Activated T-helper 1 cell treated with anti-CD3 and anti-CD28 coated beads, Interleukin-12 subunit alpha, Interleukin-12 subunit beta, Interleukin-2, Interleukin-4 antibody, amounts not matched to agents 30 ng/mL and 10 ng/mL and 1 ng/mL, durations not matched to agents 14 hours and 24 hours and 36 hours (primary cell): ENCODE measurements at regions of chr5 and their contacts with region 1.

Region 1: GRCh38 chr5:115841382-115842088 is at the starts of genes AP3S1 and ATG12:
- DNase-seq: peak; percentile 87
- H3K4me3 Mint-ChIP-seq: peak within 1 kb of the TSS; percentile 98
- H3K27ac Mint-ChIP-seq: peak within 1 kb of the TSS; percentile 99
- H3K4me1 Mint-ChIP-seq: peaks cover 52% of the 10 kb centered on the region
- H3K27me3 Mint-ChIP-seq: no peaks in the 10 kb centered on the region
- total RNA-seq, gene AP3S1: 49.7 and 53.5 TPM in 2 replicates
- total RNA-seq, gene ATG12: 29.6 and 37.4 TPM in 2 replicates

Region 2: GRCh38 chr5:115169487-115170133 is 671.9 kb before region 1 on chr5 and contains the start of gene TRIM36:
- intact Hi-C with region 1: loop called (anchors 1 kb)
- DNase-seq: peak; percentile 90
- H3K4me3 Mint-ChIP-seq: peak within 1 kb of the TSS; percentile 82
- H3K27ac Mint-ChIP-seq: peak within 1 kb of the TSS; percentile 37
- H3K4me1 Mint-ChIP-seq: peaks cover 6% of the 10 kb centered on the region
- H3K27me3 Mint-ChIP-seq: peaks cover 60% of the 10 kb centered on the region
- total RNA-seq, gene TRIM36: not detected in 2 replicates

Region 3: GRCh38 chr5:115296124-115297022 is 545.2 kb before region 1 on chr5 and contains the start of gene CCDC112:
- intact Hi-C with region 1: loop called (anchors 1 kb)
- DNase-seq: peak; percentile 51
- H3K4me3 Mint-ChIP-seq: peak within 1 kb of the TSS; percentile 77
- H3K27ac Mint-ChIP-seq: no peak within 1 kb of the TSS
- H3K4me1 Mint-ChIP-seq: peaks cover 9% of the 10 kb centered on the region
- H3K27me3 Mint-ChIP-seq: peaks cover 53% of the 10 kb centered on the region
- total RNA-seq, gene CCDC112: 0.22 and 0.29 TPM in 2 replicates

Region 4: DNA sequence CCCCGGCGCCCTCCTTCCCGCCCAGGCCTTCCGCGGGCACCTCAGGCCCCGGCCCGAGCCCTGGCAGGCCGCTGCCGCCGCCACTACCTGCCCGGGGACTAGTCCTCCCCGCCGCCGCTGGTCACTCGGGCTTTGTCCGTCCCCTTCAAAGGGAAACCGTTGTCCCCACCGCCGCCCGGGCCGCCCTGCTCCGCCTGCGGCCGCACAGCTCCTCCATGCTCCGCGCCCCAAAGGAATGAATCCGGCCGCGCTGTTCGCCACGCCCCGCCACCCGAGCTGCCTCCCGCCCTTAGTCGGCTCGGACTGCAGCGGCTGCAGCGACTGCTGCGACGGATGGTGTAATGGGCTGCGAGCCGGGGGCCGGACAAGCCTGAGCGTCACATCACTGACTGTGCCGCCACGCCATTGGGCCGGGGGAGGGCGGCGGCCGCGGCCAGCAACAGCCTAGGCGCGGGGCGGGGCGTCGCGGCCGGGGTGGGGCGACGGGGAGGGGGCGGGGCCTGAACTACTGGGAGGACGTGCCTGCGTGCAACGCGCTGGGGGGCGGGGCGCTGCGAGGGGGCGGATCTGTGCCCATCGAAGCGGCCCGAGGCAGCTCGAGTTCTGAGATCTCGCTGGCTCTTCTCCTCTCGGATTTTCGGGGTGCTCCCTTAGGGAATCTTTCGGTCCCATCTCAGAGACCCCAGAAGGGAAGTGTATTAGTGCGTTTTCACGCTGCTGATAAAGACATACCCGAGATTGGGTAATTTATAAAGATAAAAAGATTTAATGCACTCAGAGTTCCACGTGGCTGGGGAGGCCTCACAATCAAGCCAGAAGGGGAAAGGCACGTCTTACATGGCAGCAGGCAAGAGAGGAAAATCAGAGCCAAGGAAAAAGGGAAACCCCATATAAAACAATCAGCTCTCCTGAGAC is 296.8 kb before region 1 on chr5 and contains the start of gene FEM1C:
- intact Hi-C with region 1: loop called (anchors 1 kb)
- DNase-seq: peak; percentile 88
- H3K4me3 Mint-ChIP-seq: peak within 1 kb of the TSS; percentile 99
- H3K27ac Mint-ChIP-seq: peak within 1 kb of the TSS; percentile 100
- H3K4me1 Mint-ChIP-seq: peaks cover 45% of the 10 kb centered on the region
- H3K27me3 Mint-ChIP-seq: no peaks in the 10 kb centered on the region
- total RNA-seq, gene FEM1C: 13.9 and 14.5 TPM in 2 replicates

Region 5: GRCh38 chr5:115625579-115626444 is 215.7 kb before region 1 on chr5 and contains the start of gene TMED7:
- intact Hi-C with region 1: loop called (anchors 1 kb)
- DNase-seq: peak; percentile 99
- H3K4me3 Mint-ChIP-seq: no peak within 1 kb of the TSS
- H3K27ac Mint-ChIP-seq: peak within 1 kb of the TSS; percentile 88
- H3K4me1 Mint-ChIP-seq: peaks cover 32% of the 10 kb centered on the region
- H3K27me3 Mint-ChIP-seq: peaks cover 12% of the 10 kb centered on the region
- total RNA-seq, gene TMED7: 43.4 and 44.0 TPM in 2 replicates

Region 6: DNA sequence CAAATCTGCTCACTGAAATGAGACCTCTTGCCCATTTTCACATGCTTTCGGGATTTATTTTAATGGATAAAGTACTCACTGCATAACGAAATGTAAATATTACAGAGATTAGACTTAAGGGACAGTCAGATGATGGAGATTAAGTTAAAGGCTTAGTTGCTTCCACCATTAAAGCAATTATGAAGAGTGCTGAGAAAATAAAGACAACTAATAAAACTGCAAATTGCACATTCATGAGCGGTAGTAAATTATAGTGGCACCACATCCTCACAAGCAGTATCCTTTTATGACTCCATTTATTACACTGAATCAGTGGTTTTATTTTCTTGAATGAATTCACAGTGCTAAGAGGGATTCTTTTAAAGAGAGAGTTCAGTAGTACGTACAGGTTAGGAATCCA is 139.5 kb before region 1 on chr5:
- intact Hi-C with region 1: no loop called
- DNase-seq: no peak
- H3K4me3 Mint-ChIP-seq: no peak overlapping the region
- H3K27ac Mint-ChIP-seq: no peak overlapping the region
- H3K4me1 Mint-ChIP-seq: no peaks in the 10 kb centered on the region
- H3K27me3 Mint-ChIP-seq: peaks cover 15% of the 10 kb centered on the region

Region 7: DNA sequence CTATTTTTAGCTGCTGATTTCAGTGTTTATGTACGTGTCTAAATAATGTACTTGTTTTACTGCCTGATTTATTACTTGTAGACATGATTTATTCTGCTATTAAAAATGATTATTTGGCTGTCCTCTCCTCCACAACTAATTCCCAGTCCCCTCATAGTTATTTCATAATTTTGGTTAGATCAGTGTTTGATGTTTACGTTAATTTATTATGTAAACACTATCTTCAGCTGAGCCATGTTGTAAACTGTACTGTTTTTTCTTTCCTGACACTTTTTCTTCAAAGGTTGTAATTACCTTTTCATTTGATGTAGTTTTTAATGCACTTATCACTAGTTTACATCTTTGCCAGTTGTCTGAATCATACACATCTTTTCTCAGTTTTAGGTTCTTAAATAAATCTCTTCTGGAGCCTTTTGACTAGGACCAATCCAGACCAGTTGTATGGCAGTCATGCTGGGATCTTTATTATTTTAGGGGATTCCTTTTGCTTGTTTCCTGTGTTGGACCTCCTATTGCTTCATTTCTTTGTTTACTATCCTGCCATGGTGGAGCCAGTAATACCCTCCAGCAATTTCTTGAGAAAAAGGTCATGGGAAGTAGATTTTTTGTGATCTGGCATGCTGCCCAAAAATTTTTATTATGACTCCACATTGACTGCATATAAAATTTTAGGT is 16.2 kb after region 1 on chr5:
- intact Hi-C with region 1: no loop called
- DNase-seq: no peak
- H3K4me3 Mint-ChIP-seq: no peak overlapping the region
- H3K27ac Mint-ChIP-seq: no peak overlapping the region
- H3K4me1 Mint-ChIP-seq: peaks cover 17% of the 10 kb centered on the region
- H3K27me3 Mint-ChIP-seq: peaks cover 4% of the 10 kb centered on the region

Region 8: DNA sequence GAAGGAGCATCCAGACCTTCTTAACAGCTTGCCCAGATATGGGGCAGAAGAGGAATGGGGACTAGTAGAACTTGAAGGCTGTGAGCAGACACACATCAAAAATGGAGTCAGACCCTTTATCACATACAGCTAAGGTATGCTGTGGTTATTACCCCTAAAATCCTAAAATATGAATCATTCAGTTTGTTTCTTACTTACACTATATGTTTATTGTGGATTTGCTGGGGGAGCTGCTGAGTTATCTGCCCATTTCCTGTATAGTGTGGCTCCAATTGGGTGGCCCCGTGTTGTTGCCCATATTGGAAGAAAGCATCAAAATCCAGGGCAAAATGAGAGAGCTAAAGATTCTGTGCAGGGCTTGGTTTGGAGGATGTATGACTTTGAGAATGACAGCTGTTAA is 57.1 kb after region 1 on chr5:
- intact Hi-C with region 1: no loop called
- DNase-seq: no peak
- H3K4me3 Mint-ChIP-seq: no peak overlapping the region
- H3K27ac Mint-ChIP-seq: no peak overlapping the region
- H3K4me1 Mint-ChIP-seq: no peaks in the 10 kb centered on the region
- H3K27me3 Mint-ChIP-seq: no peaks in the 10 kb centered on the region

Region 9: DNA sequence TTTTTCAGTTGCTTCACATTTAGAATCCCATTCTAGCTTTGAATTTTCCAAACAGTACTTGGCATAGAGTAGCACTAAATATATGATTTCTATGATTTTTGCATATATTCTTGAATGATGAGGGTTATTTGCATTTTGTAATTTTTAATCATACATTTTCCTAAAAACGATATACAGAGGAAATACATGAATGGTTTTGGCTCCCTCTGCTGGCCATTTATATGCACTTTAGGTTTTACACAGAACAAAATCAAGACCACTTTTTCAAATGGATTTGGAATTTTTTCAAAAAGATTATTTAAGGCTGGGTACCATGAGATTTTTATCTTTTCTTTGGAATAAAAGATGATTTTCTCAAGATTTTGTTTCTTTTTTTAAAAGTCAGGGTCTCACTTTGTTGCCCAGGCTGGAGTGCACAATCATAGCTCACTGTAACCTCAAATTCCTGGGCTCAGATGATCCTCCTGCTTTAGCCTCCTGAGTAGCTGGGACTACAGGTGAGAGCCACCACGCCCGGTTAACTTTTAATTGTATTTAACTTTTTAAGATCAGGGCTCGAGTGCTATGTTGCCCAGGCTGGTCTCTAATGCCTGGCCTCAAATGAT is 226.6 kb after region 1 on chr5:
- intact Hi-C with region 1: loop called (anchors 1 kb)
- DNase-seq: peak; percentile 9
- H3K4me3 Mint-ChIP-seq: no peak overlapping the region
- H3K27ac Mint-ChIP-seq: no peak overlapping the region
- H3K4me1 Mint-ChIP-seq: no peaks in the 10 kb centered on the region
- H3K27me3 Mint-ChIP-seq: peaks cover 43% of the 10 kb centered on the region